ENCODE measurements at regions of chr5 and their contacts with region 1.

Region 1: GRCh38 chr5:136249678-136250266 is 56.8 kb upstream of the SMIM32 start:
- DNase-seq: peak; percentile 55
- H3K4me3 ChIP-seq: no peak overlapping the region
- H3K27ac ChIP-seq: no peak overlapping the region
- H3K4me1 ChIP-seq: no peaks in the 10 kb centered on the region
- H3K27me3 ChIP-seq: no peaks in the 10 kb centered on the region
- CTCF ChIP-seq: peak; percentile 64 to 73 (median 68)
- EP300 ChIP-seq: no peak
- POLR2A ChIP-seq: no peak

Region 2: DNA sequence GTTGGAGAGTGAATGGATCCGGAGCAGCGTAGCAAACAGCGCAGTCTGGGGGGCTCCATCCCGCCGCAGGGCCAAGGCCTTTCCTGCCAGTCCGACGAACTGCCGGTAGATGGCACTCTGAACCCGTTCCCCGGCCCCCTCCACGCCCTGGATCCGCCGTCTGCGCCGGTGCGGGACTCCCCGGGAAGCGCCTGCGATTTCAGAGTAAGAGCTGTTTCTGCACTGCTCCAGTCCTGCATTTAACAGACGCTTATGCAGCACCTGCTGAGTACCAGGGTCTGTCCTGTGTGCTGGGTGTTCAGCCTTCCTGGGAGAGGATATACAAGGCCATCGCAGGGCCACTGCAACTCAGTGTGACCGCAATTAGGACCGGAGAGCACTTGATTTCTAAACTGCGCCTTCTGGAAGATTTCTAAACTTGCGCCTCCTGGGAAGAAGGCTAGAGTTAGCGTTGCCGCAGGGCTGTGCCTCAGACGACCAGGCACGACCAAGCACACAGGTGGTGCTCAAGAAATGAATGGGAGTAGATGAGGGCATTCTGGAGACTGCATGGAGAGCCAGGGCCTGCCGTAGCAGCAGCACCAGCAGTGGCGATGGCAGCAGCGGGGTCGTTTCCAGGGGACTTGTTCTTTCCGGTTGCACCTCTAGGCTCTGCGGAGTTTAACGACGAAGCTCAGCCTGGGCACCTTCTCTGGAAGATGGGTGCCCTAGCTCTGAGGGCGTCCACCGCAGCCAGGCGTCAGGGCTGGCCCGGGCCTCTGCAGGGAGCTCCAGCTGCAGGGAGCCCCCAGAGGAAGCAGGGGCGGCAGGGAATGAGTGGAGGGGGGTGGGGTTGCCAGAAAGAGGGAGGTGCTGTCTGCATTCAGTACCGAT is 783.4 kb before region 1 on chr5:
- in situ Hi-C with region 1: no loop called
- intact Hi-C with region 1: no loop called
- DNase-seq: peak; percentile 73
- H3K4me3 ChIP-seq: peak overlapping the region in 1 of 4 donors; percentile 27
- H3K27ac ChIP-seq: no peak overlapping the region
- H3K4me1 ChIP-seq: peaks cover 0 to 9% (median 2%) of the 10 kb centered on the region in 4 donors
- H3K27me3 ChIP-seq: peaks cover 69% of the 10 kb centered on the region
- CTCF ChIP-seq: peak; percentile 60 to 83 (median 79)
- EP300 ChIP-seq: no peak
- POLR2A ChIP-seq: no peak

Region 3: DNA sequence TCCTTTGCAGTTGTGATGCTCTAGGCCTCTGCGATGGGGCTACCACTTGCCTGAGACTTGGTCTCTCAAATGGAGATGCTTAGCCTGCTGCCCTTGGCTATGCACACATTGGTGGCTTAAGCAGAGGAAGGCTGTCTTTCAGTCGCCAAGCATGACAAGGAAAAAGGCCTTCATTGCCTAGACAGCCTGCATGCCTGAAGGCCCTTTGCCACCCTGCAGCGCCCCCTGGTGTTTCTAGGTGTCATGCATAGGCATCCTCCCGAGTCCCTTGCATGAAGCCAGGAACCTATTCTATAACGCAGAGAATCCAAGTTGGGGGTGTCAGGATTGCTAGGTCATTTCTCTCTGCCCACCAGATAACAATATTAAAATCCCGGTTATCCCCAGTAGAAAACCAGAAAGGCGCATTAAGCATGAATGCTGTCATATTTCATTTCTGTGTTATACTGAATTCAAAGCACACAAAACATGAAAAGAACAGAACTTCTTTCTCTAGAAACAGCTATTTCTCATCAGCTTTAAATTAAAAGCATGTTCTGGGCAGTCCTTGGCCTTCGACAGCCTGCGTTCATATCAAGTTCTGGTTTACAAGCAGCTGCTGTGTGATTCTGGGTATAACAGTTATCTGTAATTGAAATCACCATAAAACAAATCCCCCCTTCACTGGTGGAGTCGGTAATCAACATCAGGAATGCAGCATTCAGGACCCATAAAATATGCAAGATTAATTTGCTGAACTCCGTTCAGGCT is 175.2 kb after region 1 on chr5:
- in situ Hi-C with region 1: loop called in 3 of 4 experiments (anchors 10 kb)
- intact Hi-C with region 1: no loop called
- DNase-seq: peak; percentile 77
- H3K4me3 ChIP-seq: no peak overlapping the region
- H3K27ac ChIP-seq: no peak overlapping the region
- H3K4me1 ChIP-seq: no peaks in the 10 kb centered on the region
- H3K27me3 ChIP-seq: no peaks in the 10 kb centered on the region
- CTCF ChIP-seq: peak; percentile 47 to 67 (median 62)
- EP300 ChIP-seq: no peak
- POLR2A ChIP-seq: no peak

Region 4: DNA sequence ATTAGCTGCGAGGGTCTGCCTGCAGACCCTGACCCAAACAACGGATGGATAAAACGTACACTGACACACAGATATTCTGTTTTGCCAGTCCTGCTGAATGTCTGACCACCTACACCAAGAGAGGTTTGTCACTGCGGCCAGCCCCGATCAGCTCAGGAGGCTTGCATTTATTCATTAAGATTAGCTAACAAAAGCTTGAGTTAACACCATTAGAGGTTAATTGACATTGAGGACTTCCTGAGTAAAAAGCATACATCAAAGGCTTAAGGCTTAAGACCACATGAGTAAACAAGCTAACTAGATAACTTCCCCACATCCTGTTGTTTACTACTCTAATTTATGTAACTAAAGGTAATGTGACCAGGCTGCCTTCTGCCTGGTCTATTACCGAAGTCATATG is 313.7 kb after region 1 on chr5:
- in situ Hi-C with region 1: no loop called
- intact Hi-C with region 1: no loop called
- DNase-seq: no peak
- H3K4me3 ChIP-seq: no peak overlapping the region
- H3K27ac ChIP-seq: no peak overlapping the region
- H3K4me1 ChIP-seq: no peaks in the 10 kb centered on the region
- H3K27me3 ChIP-seq: no peaks in the 10 kb centered on the region
- CTCF ChIP-seq: no peak
- EP300 ChIP-seq: no peak
- POLR2A ChIP-seq: no peak

Region 5: DNA sequence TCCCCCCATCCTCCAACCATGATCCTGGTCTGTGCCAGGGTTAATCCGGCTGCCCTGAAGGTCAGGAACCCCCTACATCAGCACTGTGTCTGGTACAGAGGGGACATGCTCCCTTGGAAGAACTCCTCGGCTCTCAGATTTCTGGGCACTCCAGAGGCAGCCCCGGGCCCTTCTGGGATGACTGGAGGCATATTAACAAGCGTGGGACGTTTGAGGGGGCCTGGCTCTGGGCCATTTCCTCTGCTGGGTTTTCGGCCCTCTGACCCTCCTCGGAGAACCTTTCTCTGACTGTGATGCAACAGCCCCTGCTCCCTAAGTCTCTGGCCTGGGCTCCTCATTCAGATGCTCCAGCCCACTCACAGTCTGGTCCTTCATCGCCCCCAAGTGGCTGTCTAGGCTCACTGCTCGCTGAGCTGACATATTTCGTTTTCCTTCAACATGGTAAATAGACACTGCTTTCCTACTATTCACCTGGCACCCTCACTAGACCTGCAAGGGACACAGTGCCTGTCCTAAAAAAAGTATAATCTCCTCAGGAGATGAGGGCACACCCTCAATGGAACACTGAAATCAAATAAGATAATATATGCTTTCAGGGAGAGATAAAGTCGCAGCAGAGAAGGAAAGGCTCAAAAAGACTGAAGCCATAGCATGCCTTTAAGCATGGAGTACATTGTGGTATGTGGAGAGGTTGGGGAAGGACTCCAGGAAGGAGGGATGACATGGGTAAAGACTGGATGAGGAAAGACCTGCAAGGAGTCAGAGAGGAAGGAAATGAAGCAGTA is 520.3 kb after region 1 on chr5:
- in situ Hi-C with region 1: loop called in 3 of 4 experiments (anchors 25 kb)
- intact Hi-C with region 1: no loop called
- DNase-seq: peak; percentile 48
- H3K4me3 ChIP-seq: no peak overlapping the region
- H3K27ac ChIP-seq: no peak overlapping the region
- H3K4me1 ChIP-seq: no peaks in the 10 kb centered on the region
- H3K27me3 ChIP-seq: no peaks in the 10 kb centered on the region
- CTCF ChIP-seq: peak; percentile 53 to 62 (median 59)
- EP300 ChIP-seq: no peak
- POLR2A ChIP-seq: no peak